Activated CD4-positive, alpha-beta memory T cell treated with anti-CD3 and anti-CD28 coated beads, Interleukin-2, amount 10 ng/mL, durations not matched to agents 7 days and 5 days (primary cell): ENCODE measurements at regions of chr1 and their contacts with region 1.

Region 1: DNA sequence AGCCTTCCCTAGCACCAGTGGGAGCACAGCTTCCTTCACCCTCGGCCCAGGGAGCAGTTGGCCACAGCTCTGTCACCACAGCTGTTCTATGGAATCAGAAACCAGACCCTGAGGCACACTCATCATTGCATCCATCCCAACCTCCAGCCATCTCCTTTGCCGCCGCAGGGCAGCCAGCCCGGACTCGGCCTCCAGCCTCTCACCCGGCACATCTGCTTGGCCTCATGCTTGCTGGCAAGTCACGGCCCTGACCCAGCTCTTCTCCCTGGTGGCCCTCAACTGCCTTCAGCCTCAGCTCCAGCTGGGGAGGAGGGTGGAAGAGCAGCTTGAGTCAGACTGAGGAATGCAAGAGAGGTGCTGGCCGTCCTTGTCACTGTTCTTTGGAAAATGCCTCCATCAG is 59.8 kb downstream of the TOR1AIP2 start:
- DNase-seq: no peak
- H3K4me3 Mint-ChIP-seq: no peak overlapping the region
- H3K27ac Mint-ChIP-seq: no peak overlapping the region
- H3K4me1 Mint-ChIP-seq: peaks cover 16% of the 10 kb centered on the region
- H3K27me3 Mint-ChIP-seq: peaks cover 3% of the 10 kb centered on the region

Region 2: GRCh38 chr1:179474713-179475112 is 343.1 kb before region 1 on chr1:
- CTCF ChIA-PET with region 1: no interaction called
- POLR2A ChIA-PET with region 1: no interaction called
- DNase-seq: no peak
- H3K4me3 Mint-ChIP-seq: no peak overlapping the region
- H3K27ac Mint-ChIP-seq: no peak overlapping the region
- H3K4me1 Mint-ChIP-seq: no peaks in the 10 kb centered on the region
- H3K27me3 Mint-ChIP-seq: no peaks in the 10 kb centered on the region

Region 3: GRCh38 chr1:179575497-179576314 is 242.1 kb before region 1 on chr1 and contains the start of gene NPHS2:
- CTCF ChIA-PET with region 1: no interaction called
- POLR2A ChIA-PET with region 1: no interaction called
- DNase-seq: no peak
- H3K4me3 Mint-ChIP-seq: no peak within 1 kb of the TSS
- H3K27ac Mint-ChIP-seq: no peak within 1 kb of the TSS
- H3K4me1 Mint-ChIP-seq: no peaks in the 10 kb centered on the region
- H3K27me3 Mint-ChIP-seq: peaks cover 43% of the 10 kb centered on the region
- total RNA-seq, gene NPHS2: not detected

Region 4: DNA sequence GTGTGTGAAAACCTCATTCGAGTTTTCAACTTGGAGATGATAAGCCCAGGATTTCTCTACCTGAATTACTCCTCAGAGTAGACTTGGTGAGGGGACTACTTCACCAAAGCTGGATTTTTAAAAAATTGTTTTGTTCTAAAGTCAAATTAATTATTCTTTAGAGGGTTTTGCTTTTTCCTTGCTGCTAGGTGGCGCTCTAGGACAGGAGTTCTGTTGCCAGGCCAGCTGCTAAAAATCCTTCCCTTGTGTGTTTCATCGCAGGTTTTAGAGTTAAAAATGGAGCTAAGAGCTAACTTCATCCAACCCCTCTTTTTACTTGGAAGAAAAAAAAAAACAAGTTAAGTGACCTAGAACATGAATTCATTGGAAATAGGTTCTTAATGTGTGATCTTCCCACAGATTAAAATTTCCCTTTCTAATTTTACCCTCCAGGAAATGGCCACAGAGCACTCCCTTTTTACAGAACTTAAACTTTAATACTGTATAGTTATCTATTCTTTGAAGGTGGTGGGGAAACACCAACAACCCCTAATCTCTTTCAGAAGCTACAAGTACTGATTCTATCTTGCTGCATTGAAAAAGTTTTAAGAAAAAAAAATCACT is 111.3 kb before region 1 on chr1:
- CTCF ChIA-PET with region 1: interaction called, 419 read pairs
- POLR2A ChIA-PET with region 1: interaction called, 3 read pairs
- DNase-seq: peak; percentile 58
- H3K4me3 Mint-ChIP-seq: no peak overlapping the region
- H3K27ac Mint-ChIP-seq: no peak overlapping the region
- H3K4me1 Mint-ChIP-seq: peaks cover 12% of the 10 kb centered on the region
- H3K27me3 Mint-ChIP-seq: peaks cover 2% of the 10 kb centered on the region